Sigmoid colon (tissue), 7 donors: ENCODE measurements at regions of chr22 and their contacts with region 1.

Region 1: GRCh38 chr22:20507253-20508066 is at the start of gene MED15:
- DNase-seq: peak; percentile 95
- H3K4me3 ChIP-seq: peak within 1 kb of the TSS; percentile 76 to 86 (median 80)
- H3K27ac ChIP-seq: peak within 1 kb of the TSS; percentile 96 to 99 (median 97)
- H3K4me1 ChIP-seq: peaks cover 0 to 50% (median 43%) of the 10 kb centered on the region in 4 donors
- H3K27me3 ChIP-seq: no peaks in the 10 kb centered on the region
- CTCF ChIP-seq: no peak
- EP300 ChIP-seq: no peak
- POLR2A ChIP-seq: peak; percentile 71 to 90
- total RNA-seq, gene MED15: 26.4 to 75.3 (median 34.9) TPM

Region 2: DNA sequence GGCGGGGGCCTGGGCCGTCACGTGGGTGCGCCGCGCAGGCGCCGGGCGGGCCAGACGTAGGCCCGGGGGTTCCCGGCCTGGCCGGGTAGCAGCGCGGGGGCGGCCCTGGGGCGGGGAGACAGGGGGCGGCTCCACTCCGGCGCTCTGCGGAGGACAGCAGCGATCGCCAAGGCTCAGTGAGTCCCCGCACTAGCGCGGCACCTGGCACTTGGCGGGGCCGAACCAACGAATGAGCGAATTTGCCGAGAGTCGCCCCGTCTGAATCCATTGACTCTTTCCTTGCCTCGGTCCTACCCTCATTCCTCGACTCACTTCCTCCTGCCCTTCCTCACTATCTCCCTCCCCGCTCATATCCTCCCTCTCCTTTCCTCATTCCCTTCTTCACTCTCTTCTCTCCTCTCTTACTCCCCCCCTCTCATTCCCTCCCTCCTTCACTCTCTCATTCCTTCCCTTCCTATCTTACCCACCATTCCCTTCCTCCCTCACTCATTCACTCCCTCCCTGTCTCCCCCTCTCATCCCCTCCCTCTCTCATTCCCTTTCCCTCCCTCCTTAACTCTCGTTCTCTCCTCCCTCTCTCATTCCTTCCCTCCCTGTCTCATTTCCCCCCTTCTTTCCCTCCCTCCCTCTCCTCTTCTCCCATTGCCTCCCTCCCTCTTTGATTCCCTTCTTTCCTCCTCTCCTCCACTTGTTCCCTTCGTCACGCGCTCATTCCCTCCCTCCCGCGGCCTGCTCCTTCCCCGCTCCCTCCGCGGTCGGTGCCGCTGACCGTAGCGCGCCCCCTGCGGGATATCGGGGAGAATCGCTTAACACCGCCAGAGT is 11.4 kb before region 1 on chr22:
- intact Hi-C with region 1: loop called (anchors 1 kb)
- DNase-seq: peak; percentile 96
- H3K4me3 ChIP-seq: peak overlapping the region; percentile 42 to 85 (median 72)
- H3K27ac ChIP-seq: peak overlapping the region; percentile 91 to 97 (median 94)
- H3K4me1 ChIP-seq: peaks cover 0 to 38% (median 26%) of the 10 kb centered on the region in 4 donors
- H3K27me3 ChIP-seq: no peaks in the 10 kb centered on the region
- CTCF ChIP-seq: peak; percentile 83 to 97 (median 92)
- EP300 ChIP-seq: no peak
- POLR2A ChIP-seq: peak; percentile 70 to 80

Region 3: DNA sequence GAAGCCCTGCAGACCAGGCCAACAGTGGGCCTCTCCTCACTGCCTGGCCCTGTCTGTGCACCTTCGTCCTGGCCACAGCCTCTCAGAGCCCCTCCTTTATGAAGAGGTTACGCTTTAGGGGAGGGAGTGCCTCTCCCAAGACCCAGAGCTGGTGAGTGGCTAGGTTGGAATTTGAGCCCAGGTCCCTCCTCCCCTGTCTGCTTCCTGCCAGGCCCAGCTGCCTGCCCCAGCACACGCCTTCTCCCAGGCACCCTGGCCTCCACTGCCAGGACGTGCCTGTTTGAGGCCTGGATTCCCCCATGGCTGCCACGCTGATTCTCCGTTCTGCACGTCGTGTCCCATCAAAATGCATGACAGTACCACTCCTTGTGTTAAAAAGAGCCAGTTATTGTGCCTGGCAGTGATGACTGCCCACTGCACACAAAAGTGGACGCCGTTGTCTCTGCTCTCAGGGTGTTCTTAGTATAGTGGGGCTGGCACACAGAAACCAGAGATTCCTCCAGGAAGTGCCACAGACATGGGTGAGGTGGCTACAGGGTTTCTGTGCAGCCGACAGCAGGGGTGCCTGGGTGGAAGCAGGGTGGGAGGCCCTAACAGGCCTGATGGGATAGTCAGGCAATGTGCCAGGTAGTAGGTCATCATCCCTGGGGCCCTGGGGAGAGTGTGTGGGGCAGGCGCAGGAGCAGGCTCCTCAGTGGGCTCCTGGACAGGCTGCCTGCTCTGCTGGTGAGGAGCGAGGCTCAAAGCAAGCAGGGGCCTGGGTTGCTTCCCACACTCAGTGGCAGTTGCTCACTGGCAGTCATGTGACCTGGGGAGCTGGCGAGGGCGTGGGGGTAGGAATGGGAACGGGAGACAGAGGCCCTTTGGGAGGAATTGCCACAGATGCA is 24.1 kb after region 1 on chr22:
- intact Hi-C with region 1: loop called (anchors 2 kb)
- DNase-seq: peak; percentile 83
- H3K4me3 ChIP-seq: no peak overlapping the region
- H3K27ac ChIP-seq: peak overlapping the region; percentile 77 to 89 (median 82)
- H3K4me1 ChIP-seq: peaks cover 3 to 74% (median 60%) of the 10 kb centered on the region in 4 donors
- H3K27me3 ChIP-seq: no peaks in the 10 kb centered on the region
- CTCF ChIP-seq: no peak
- EP300 ChIP-seq: no peak
- POLR2A ChIP-seq: no peak

Region 4: DNA sequence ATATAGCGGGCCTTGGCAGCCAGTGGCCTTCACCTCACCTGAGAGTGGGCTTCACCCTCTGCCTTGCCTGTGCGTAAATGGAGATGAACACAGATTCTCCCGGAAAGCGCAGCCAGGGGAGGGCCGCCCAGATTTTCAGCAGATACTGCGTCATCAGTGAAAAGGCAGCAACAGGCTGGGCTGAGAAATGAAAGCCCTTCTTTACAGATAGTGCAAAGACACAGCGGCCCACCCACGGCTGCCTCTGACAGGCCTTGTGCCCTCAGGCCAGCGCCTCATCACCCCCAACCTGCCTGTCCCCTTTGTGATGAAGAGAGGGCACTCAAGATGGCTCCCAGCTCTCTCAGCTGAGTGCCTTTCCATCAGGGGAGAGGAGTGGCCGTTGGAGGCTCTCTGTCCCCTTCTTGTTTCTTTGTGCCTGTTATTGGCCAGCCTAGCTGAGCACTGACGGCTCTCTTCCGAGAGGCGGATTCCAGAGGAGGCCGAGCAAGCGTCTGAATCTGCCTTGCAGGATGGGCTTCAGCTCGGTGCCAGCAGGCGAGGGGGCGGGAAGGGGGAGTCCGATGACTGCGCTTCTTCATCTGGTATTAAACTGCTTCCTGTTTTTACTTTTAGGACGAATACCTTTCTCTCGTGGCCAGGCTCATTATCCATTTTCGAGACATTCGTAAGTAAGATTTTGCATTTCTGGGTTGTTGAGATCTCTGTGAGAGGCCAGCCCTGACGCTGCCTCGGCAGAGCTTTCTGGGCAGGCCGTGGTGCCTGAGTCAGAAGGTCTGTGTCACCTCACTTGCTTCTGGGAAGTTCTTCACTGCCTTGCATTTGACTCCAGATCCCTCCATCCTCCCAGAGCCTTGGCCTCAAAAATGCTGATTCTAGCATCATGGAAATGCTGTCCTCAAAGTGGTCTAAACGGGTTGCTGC is 43.6 kb after region 1 on chr22:
- intact Hi-C with region 1: loop called (anchors 2 kb)
- DNase-seq: peak; percentile 83
- H3K4me3 ChIP-seq: peak overlapping the region in 3 of 4 donors; percentile 7 to 22 (median 21)
- H3K27ac ChIP-seq: peak overlapping the region; percentile 81 to 95 (median 88)
- H3K4me1 ChIP-seq: peaks cover 0 to 70% (median 61%) of the 10 kb centered on the region in 4 donors
- H3K27me3 ChIP-seq: no peaks in the 10 kb centered on the region
- CTCF ChIP-seq: peak in 1 of 4 experiments; percentile 10
- EP300 ChIP-seq: peak in 1 of 4 donors; percentile 9
- POLR2A ChIP-seq: no peak